Activated naive CD4-positive, alpha-beta T cell treated with anti-CD3 and anti-CD28 coated beads for 36 hours (primary cell): ENCODE measurements at regions of chr21 and their contacts with region 1.

Region 1: GRCh38 chr21:17925000-17925610 is 105.9 kb upstream of the C21orf91 start:
- DNase-seq: peak; percentile 68
- H3K4me3 Mint-ChIP-seq: no peak overlapping the region
- H3K27ac Mint-ChIP-seq: no peak overlapping the region
- H3K4me1 Mint-ChIP-seq: no peaks in the 10 kb centered on the region
- H3K27me3 Mint-ChIP-seq: peaks cover 5% of the 10 kb centered on the region

Region 2: GRCh38 chr21:17611414-17612022 is 313.6 kb before region 1 on chr21:
- CTCF ChIA-PET with region 1: interaction called, 3 read pairs
- intact Hi-C with region 1: loop called (anchors 2 kb)
- DNase-seq: peak; percentile 88
- H3K4me3 Mint-ChIP-seq: peak overlapping the region; percentile 83
- H3K27ac Mint-ChIP-seq: peak overlapping the region; percentile 91
- H3K4me1 Mint-ChIP-seq: peaks cover 31% of the 10 kb centered on the region
- H3K27me3 Mint-ChIP-seq: no peaks in the 10 kb centered on the region

Region 3: GRCh38 chr21:17679002-17679600 is 246.0 kb before region 1 on chr21:
- CTCF ChIA-PET with region 1: interaction called, 31 read pairs
- intact Hi-C with region 1: loop called (anchors 1 kb)
- DNase-seq: no peak
- H3K4me3 Mint-ChIP-seq: no peak overlapping the region
- H3K27ac Mint-ChIP-seq: no peak overlapping the region
- H3K4me1 Mint-ChIP-seq: peaks cover 11% of the 10 kb centered on the region
- H3K27me3 Mint-ChIP-seq: no peaks in the 10 kb centered on the region

Region 4: GRCh38 chr21:17903029-17903806 is 21.9 kb before region 1 on chr21:
- CTCF ChIA-PET with region 1: interaction called, 16 read pairs
- intact Hi-C with region 1: no loop called
- DNase-seq: no peak
- H3K4me3 Mint-ChIP-seq: no peak overlapping the region
- H3K27ac Mint-ChIP-seq: no peak overlapping the region
- H3K4me1 Mint-ChIP-seq: peaks cover 8% of the 10 kb centered on the region
- H3K27me3 Mint-ChIP-seq: no peaks in the 10 kb centered on the region